HEK293 (cell line): ENCODE measurements at regions of chr3 and their contacts with region 1.

Region 1: DNA sequence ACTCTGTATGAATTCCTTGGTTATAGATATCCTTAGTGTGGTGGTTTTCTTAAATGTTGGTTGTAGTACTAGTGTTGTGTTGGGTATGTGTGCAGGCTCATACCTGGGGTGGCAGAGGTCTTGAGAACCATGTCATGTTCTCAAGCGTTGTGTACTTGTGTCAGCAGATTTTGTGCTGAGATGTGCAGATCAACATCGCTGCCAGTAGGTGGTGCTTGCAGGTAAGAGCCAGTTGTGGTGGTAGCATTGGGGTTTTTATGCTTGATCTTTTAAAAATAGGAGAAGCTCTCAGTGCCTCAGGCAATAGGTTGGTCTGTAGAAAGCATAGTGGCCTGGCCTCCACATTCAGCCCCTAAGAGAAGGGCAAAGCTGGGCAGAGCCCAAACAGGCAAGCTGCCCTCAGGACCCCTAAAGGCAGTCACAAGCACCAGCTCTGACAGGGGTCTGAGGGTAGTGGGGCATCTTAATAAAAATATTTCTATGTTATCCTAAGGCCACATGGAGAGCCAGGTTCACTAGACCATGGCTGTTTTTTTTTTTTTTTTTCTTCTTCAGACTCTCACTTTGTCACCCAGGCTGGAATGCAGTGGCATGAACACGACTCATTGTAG is 164.0 kb downstream of the IL20RB start:
- H3K4me3 ChIP-seq: no peak overlapping the region
- H3K27ac ChIP-seq: no peak overlapping the region
- H3K4me1 ChIP-seq: no peaks in the 10 kb centered on the region
- CTCF ChIP-seq: no peak

Region 2: DNA sequence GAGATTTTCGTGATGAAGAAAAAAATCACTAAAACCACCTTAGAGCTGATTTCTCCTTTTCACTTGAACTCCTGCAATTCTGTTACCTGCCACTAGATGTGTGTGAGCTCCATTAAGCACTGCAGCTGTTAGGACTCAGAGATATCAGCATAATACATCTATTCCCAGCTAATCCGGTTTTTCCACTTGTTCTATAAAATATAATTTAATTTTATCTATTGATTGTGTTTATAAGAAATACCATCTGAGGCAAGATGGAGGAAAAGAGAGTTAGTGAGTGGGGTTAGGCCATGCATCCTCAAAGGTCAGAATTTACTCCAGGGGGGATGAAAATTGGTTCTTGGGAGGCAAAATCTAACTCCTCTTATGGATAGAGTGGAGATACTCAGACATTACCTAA is 11.3 kb before region 1 on chr3:
- CTCF ChIA-PET with region 1: interaction called, 19 read pairs
- POLR2A ChIA-PET with region 1: no interaction called
- H3K4me3 ChIP-seq: no peak overlapping the region
- H3K27ac ChIP-seq: no peak overlapping the region
- H3K4me1 ChIP-seq: no peaks in the 10 kb centered on the region
- CTCF ChIP-seq: no peak